ENCODE measurements at regions of chr4 and their contacts with region 1.

Region 1: DNA sequence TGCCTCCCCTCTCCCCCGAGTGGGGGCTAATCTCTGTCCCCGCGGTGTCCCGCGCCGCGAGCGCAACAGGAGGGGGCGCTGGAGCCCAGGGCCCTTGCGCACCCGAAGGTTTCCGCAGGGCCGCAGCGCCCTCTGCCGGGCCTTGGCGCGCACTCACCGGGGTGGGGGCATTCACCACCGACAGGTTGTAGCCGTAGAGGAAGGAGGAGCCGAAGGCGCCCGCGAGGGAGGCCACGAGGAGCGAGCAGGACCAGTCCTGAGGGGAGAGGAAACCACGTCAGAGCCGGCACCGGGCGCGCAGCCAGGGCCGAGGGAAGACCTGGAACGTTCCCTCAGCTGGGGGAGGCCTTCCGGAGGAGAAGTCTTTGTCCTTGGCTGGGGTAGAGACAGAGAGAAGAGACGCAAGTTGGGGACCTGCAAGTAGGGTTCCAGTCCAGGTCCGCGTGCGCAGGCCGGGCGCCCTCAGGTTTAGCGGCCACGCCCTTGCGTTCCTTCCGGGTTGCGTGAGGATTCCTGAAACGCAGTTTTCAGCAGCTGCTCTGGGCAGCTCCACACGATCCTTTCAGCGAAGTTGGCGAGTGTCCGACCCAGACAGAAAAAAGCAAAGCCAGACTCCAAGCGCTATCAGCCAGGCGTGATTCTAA is 2.4 kb downstream of the SLC2A9 start:
- DNase-seq: peak; percentile 94 to 99 (median 96)
- H3K4me3 ChIP-seq: peak overlapping the region; percentile 67 to 82 (median 76)
- H3K27ac ChIP-seq: peak overlapping the region; percentile 92 to 95
- H3K4me1 ChIP-seq: peaks cover 0 to 36% (median 24%) of the 10 kb centered on the region in 3 donors
- H3K27me3 ChIP-seq: no peaks in the 10 kb centered on the region
- CTCF ChIP-seq: peak; percentile 98

Region 2: GRCh38 chr4:9762823-9763475 is 256.0 kb before region 1 on chr4:
- intact Hi-C with region 1: loop called (anchors 10 kb)
- DNase-seq: peak in 4 of 5 donors; percentile 71 to 95 (median 84)
- H3K4me3 ChIP-seq: no peak overlapping the region
- H3K27ac ChIP-seq: no peak overlapping the region
- H3K4me1 ChIP-seq: no peaks in the 10 kb centered on the region
- H3K27me3 ChIP-seq: no peaks in the 10 kb centered on the region
- CTCF ChIP-seq: peak; percentile 76

Region 3: GRCh38 chr4:10157478-10158332 is 138.8 kb after region 1 on chr4:
- intact Hi-C with region 1: no loop called
- DNase-seq: peak in 4 of 5 donors; percentile 68 to 89 (median 76)
- H3K4me3 ChIP-seq: no peak overlapping the region
- H3K27ac ChIP-seq: no peak overlapping the region
- H3K4me1 ChIP-seq: peaks cover 0 to 5% (median 2%) of the 10 kb centered on the region in 3 donors
- H3K27me3 ChIP-seq: no peaks in the 10 kb centered on the region
- CTCF ChIP-seq: peak; percentile 80

Region 4: DNA sequence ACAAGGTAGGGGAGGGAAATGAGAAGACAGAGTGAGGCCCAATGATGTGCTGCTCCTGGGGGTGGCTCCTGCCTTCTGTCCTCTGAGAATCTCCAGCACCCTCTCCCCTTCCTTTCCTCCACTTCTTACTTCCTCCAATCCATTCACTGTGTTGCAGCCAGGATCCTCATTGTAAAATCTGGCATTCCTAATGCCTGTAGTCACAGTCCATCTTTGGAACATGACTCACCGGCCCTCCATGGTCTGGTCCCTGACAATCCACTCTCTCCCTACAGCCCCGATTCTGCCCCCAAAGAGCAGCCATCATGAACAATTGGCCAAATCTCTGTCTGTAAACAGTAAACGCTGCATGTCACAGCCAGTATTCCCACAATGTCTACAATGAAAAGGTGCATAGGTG is 592.7 kb after region 1 on chr4:
- intact Hi-C with region 1: no loop called
- DNase-seq: no peak
- H3K4me3 ChIP-seq: no peak overlapping the region
- H3K27ac ChIP-seq: no peak overlapping the region
- H3K4me1 ChIP-seq: no peaks in the 10 kb centered on the region
- H3K27me3 ChIP-seq: no peaks in the 10 kb centered on the region
- CTCF ChIP-seq: no peak